Activated CD8-positive, alpha-beta memory T cell treated with anti-CD3 and anti-CD28 coated beads, Interleukin-2, amount 10 ng/mL, durations not matched to agents 7 days and 5 days (primary cell): ENCODE measurements at regions of chr10 and their contacts with region 1.

Region 1: GRCh38 chr10:68212721-68213352 is 19.1 kb downstream of the ATOH7 start:
- DNase-seq: no peak
- ATAC-seq: no peak
- H3K4me3 Mint-ChIP-seq: no peak overlapping the region
- H3K27ac Mint-ChIP-seq: no peak overlapping the region
- H3K4me1 Mint-ChIP-seq: no peaks in the 10 kb centered on the region
- H3K27me3 Mint-ChIP-seq: peaks cover 25% of the 10 kb centered on the region

Region 2: GRCh38 chr10:68171539-68172080 is 41.2 kb before region 1 on chr10:
- CTCF ChIA-PET with region 1: no interaction called
- DNase-seq: no peak
- ATAC-seq: no peak
- H3K4me3 Mint-ChIP-seq: no peak overlapping the region
- H3K27ac Mint-ChIP-seq: no peak overlapping the region
- H3K4me1 Mint-ChIP-seq: peaks cover 2% of the 10 kb centered on the region
- H3K27me3 Mint-ChIP-seq: peaks cover 3% of the 10 kb centered on the region

Region 3: GRCh38 chr10:68231106-68231816 is 18.4 kb after region 1 on chr10:
- CTCF ChIA-PET with region 1: interaction called, 19 read pairs
- DNase-seq: peak; percentile 48
- ATAC-seq: peak; percentile 94
- H3K4me3 Mint-ChIP-seq: peak overlapping the region; percentile 68
- H3K27ac Mint-ChIP-seq: no peak overlapping the region
- H3K4me1 Mint-ChIP-seq: peaks cover 9% of the 10 kb centered on the region
- H3K27me3 Mint-ChIP-seq: peaks cover 53% of the 10 kb centered on the region

Region 4: GRCh38 chr10:68301790-68302502 is 89.1 kb after region 1 on chr10:
- CTCF ChIA-PET with region 1: interaction called, 20 read pairs
- DNase-seq: no peak
- ATAC-seq: peak; percentile 58
- H3K4me3 Mint-ChIP-seq: no peak overlapping the region
- H3K27ac Mint-ChIP-seq: no peak overlapping the region
- H3K4me1 Mint-ChIP-seq: no peaks in the 10 kb centered on the region
- H3K27me3 Mint-ChIP-seq: no peaks in the 10 kb centered on the region

Region 5: DNA sequence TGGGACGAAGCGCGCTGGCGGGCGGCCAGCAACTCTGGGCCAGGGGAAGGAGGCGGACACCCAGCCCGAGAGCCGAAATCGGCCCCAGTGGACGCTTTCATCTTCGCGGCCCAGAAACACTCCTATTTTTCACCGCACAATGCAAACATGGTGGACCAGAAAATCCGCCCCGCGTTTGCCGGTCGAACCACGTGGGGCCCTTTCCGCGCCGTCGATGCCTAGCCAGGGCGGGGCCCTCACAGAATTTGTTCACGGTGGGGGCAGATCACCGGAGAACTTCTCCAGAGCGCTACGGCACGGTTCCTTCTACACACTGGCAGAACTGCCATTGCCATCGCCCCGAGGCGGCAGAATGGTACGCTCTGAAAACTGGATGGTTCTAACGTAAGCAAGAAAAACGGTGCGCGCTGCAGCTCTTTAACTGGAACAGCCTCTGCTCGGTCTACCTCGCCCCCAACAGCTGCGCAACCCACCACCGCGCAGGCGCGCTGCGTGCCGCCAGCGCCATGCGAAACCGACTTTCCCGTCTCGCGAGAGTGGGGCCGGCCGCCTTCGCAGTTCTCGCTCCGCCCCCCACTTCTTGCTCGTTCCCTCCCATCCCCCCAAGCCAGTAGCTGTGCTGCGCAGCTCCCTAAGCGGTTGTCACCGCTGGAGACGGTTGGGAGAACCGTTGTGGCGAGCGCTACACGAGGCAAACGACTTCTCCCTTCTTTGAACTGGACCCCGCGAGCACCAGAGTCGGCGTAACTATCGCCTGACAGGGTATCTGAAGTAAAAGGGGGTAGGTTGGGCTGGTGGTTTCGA is 118.8 kb after region 1 on chr10 and contains the start of gene HNRNPH3:
- CTCF ChIA-PET with region 1: interaction called, 11 read pairs
- DNase-seq: peak; percentile 99
- ATAC-seq: peak; percentile 87
- H3K4me3 Mint-ChIP-seq: peak within 1 kb of the TSS; percentile 99
- H3K27ac Mint-ChIP-seq: peak within 1 kb of the TSS; percentile 100
- H3K4me1 Mint-ChIP-seq: peaks cover 34% of the 10 kb centered on the region
- H3K27me3 Mint-ChIP-seq: no peaks in the 10 kb centered on the region
- total RNA-seq, gene HNRNPH3: 124 to 129 TPM

Region 6: DNA sequence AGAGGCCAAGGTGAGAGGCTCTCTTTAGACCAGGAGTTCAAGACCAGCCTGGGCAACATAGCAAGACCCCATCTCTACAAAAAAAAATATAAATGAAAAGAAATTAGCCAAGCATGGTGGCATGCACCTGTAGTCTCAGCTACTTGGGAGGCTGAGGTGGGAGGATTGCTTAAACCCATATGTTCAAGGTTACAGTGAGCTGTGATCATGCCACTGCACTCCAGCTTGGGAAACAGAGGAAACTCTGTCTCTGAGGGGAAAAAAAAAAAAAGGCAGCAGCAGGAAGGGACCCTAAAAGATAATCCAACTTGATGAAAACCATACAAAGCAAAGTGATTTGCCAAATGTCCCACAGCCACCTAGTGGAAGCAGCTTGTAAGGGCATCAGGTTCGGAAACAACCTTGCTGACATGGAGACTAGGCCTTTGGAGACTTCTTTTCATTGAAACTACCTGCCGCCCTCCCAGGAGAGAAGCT is 135.5 kb after region 1 on chr10:
- CTCF ChIA-PET with region 1: interaction called, 16 read pairs
- DNase-seq: peak; percentile 65
- ATAC-seq: peak; percentile 61
- H3K4me3 Mint-ChIP-seq: no peak overlapping the region
- H3K27ac Mint-ChIP-seq: peak overlapping the region; percentile 45
- H3K4me1 Mint-ChIP-seq: peaks cover 16% of the 10 kb centered on the region
- H3K27me3 Mint-ChIP-seq: no peaks in the 10 kb centered on the region

Region 7: GRCh38 chr10:68752711-68753350 is 540.0 kb after region 1 on chr10:
- CTCF ChIA-PET with region 1: no interaction called
- DNase-seq: no peak
- ATAC-seq: no peak
- H3K4me3 Mint-ChIP-seq: no peak overlapping the region
- H3K27ac Mint-ChIP-seq: no peak overlapping the region
- H3K4me1 Mint-ChIP-seq: no peaks in the 10 kb centered on the region
- H3K27me3 Mint-ChIP-seq: no peaks in the 10 kb centered on the region

Region 8: GRCh38 chr10:69186524-69186923 is 973.7 kb after region 1 on chr10:
- CTCF ChIA-PET with region 1: no interaction called
- DNase-seq: no peak
- ATAC-seq: no peak
- H3K4me3 Mint-ChIP-seq: no peak overlapping the region
- H3K27ac Mint-ChIP-seq: peak overlapping the region; percentile 59
- H3K4me1 Mint-ChIP-seq: peaks cover 34% of the 10 kb centered on the region
- H3K27me3 Mint-ChIP-seq: no peaks in the 10 kb centered on the region